ENCODE measurements at regions of chr1 and their contacts with region 1.

Region 1: GRCh38 chr1:183291802-183292514 is 105.9 kb downstream of the LAMC2 start:
- DNase-seq: peak in 1 of 2 donors; percentile 89
- H3K4me3 ChIP-seq: no peak overlapping the region
- H3K27ac ChIP-seq: peak overlapping the region; percentile 88 to 91
- H3K4me1 ChIP-seq: peaks cover 0 to 30% of the 10 kb centered on the region in 2 donors
- H3K27me3 ChIP-seq: no peaks in the 10 kb centered on the region
- CTCF ChIP-seq: no peak

Region 2: GRCh38 chr1:182855911-182856310 is 436.0 kb before region 1 on chr1:
- intact Hi-C with region 1: no loop called
- DNase-seq: no peak
- H3K4me3 ChIP-seq: no peak overlapping the region
- H3K27ac ChIP-seq: no peak overlapping the region
- H3K4me1 ChIP-seq: peaks cover 0 to 6% of the 10 kb centered on the region in 2 donors
- H3K27me3 ChIP-seq: no peaks in the 10 kb centered on the region
- CTCF ChIP-seq: no peak

Region 3: DNA sequence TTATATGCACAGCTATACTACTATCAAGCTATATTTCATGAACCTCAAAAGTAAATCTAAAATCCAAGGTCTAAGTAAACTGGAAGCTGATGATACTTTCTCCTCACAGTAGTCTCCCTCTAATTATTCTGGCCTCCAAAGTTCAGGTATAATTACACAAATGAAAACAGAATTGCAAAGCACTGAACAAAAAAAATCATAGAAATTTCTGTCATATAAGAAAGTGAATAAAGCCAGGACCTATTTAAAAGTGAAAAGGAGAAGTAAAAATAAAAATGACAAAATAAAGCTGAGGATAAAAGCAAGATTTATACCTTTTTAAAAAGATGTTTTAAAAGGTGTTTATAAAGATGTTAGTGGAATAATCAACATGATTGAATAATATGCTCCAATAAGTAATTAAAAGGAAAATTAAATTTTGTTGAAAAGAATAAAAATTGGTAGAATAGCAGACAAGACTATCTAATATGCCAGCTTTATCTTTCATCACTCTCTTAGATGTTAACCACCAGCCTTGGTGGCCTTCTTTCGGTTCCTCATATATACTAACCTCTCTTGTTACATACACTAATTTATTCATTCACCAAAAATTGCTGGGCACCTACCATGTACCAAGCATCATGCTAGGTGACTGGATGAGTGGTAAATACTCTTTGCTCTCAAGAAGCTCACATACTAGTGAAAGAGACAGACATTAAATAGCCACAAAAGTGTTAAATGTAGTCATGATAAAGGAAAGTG is 364.1 kb before region 1 on chr1:
- intact Hi-C with region 1: no loop called
- DNase-seq: no peak
- H3K4me3 ChIP-seq: no peak overlapping the region
- H3K27ac ChIP-seq: no peak overlapping the region
- H3K4me1 ChIP-seq: no peaks in the 10 kb centered on the region
- H3K27me3 ChIP-seq: no peaks in the 10 kb centered on the region
- CTCF ChIP-seq: no peak

Region 4: DNA sequence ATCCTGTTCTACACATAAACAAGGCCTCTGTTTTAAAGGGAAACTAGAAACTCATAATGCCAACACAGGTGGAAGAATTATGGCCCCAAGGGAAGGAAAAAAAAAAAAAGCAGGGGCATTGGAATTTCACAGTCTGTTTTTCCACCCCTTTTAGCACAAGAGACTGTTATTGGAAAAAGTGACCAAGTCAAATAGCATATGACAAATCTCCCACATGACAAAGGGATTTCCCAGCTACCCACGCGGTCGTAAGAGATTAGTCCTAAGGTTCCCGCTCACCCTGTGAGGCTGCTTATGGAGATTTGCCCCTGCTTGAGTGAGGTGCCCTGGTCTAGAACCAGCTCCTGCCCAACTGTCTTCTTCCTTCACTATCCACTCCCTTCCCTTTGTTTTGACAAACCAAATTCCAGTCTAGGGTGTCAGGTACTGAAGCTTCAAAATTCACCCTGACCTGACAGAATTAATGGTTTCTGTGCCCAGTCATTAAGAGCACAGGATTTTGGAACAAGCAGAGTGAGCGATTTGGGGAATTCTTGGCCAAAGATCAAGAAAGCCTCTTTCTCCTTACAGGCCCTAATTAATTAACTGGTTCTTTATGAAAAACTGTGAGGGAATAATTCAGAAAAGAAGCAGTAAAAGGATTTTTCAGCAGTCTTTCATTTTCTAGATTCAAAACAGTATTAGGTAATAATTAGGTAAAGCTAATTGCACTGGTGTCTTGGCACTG is 19.0 kb after region 1 on chr1:
- intact Hi-C with region 1: loop called (anchors 1 kb)
- DNase-seq: peak; percentile 39 to 89
- H3K4me3 ChIP-seq: no peak overlapping the region
- H3K27ac ChIP-seq: peak overlapping the region; percentile 86 to 93
- H3K4me1 ChIP-seq: peaks cover 6 to 37% of the 10 kb centered on the region in 2 donors
- H3K27me3 ChIP-seq: no peaks in the 10 kb centered on the region
- CTCF ChIP-seq: no peak